Activated CD4-positive, alpha-beta memory T cell treated with anti-CD3 and anti-CD28 coated beads for 36 hours (primary cell): ENCODE measurements at regions of chr12 and their contacts with region 1.

Region 1: DNA sequence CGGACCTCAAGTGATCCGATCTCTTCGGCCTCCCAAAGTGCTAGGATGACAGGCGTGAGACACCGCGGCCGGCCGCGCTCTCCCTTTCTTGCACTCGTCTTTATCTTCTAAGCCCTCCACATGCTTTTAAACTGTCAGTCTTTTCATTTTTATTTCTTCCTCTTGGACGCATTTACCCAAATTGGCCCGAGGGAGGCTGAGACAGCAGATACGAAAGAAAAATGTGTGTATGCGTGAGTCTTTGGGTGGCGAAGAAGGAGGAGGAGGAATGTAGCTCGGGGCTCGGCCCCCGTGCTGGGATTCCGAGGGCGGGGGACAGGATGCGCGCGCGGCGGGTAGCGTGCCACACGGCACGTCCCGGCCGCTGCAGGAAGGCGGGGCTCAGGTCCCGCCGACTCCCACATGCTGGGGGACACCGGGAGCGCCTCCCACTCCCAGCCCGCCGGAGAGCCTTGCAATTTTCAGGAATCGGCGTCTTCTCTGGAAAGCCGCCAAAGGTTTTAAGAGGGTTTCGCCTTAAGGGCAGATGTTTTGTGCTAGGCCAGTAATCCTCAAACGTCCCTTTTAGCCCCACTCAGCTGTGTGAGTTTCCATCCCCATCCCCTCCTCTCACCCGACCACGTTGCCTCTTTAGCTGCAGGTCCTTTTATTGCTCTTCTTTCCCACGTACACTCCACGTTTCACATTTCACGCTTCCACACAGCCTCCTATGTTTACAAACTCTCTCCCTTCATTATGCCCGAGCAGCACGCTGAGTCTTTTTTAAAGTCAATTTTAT is 34.7 kb upstream of the SLC2A3 start:
- DNase-seq: peak; percentile 92
- H3K4me3 Mint-ChIP-seq: peak overlapping the region; percentile 77
- H3K27ac Mint-ChIP-seq: peak overlapping the region; percentile 98
- H3K4me1 Mint-ChIP-seq: peaks cover 34% of the 10 kb centered on the region
- H3K27me3 Mint-ChIP-seq: no peaks in the 10 kb centered on the region

Region 2: GRCh38 chr12:7989827-7990551 is 19.3 kb after region 1 on chr12:
- CTCF ChIA-PET with region 1: interaction called, 17 read pairs
- POLR2A ChIA-PET with region 1: interaction called, 49 read pairs
- intact Hi-C with region 1: loop called (anchors 1 kb)
- DNase-seq: peak; percentile 90
- H3K4me3 Mint-ChIP-seq: peak overlapping the region; percentile 44
- H3K27ac Mint-ChIP-seq: peak overlapping the region; percentile 87
- H3K4me1 Mint-ChIP-seq: peaks cover 40% of the 10 kb centered on the region
- H3K27me3 Mint-ChIP-seq: no peaks in the 10 kb centered on the region

Region 3: GRCh38 chr12:8026291-8026900 is 55.7 kb after region 1 on chr12:
- CTCF ChIA-PET with region 1: interaction called, 4 read pairs
- POLR2A ChIA-PET with region 1: interaction called, 8 read pairs
- intact Hi-C with region 1: loop called (anchors 1 kb)
- DNase-seq: peak; percentile 98
- H3K4me3 Mint-ChIP-seq: peak overlapping the region; percentile 88
- H3K27ac Mint-ChIP-seq: peak overlapping the region; percentile 100
- H3K4me1 Mint-ChIP-seq: peaks cover 9% of the 10 kb centered on the region
- H3K27me3 Mint-ChIP-seq: no peaks in the 10 kb centered on the region